Left colon (tissue), 2 donors: ENCODE measurements at regions of chr14 and their contacts with region 1.

Region 1: DNA sequence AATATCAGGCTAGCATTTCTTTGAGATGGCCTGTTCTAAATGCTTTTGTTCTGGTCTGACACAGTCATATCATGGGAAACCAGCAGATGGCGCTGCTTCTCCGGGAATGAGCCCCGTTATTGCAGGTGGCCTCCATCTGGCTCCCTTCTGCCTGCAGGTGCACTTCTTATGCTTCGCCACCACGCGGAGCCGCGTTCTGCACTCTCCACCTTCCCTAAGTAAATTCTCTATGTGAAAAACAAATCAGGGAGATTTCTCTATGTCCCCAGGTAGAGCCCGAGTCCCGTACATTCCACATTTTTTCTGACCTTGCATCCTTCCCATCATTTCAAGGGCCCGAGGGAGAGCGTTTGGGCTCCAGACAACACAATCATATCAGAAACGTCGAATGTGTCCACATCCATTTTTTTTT is 26.2 kb downstream of the GLRX5 start:
- DNase-seq: peak; percentile 80 to 93
- ATAC-seq: peak; percentile 99

Region 2: GRCh38 chr14:95774265-95775160 is 213.5 kb after region 1 on chr14:
- intact Hi-C with region 1: loop called in 1 of 2 experiments (anchors 5 kb)
- DNase-seq: peak in 1 of 2 donors; percentile 41
- ATAC-seq: peak; percentile 44

Region 3: DNA sequence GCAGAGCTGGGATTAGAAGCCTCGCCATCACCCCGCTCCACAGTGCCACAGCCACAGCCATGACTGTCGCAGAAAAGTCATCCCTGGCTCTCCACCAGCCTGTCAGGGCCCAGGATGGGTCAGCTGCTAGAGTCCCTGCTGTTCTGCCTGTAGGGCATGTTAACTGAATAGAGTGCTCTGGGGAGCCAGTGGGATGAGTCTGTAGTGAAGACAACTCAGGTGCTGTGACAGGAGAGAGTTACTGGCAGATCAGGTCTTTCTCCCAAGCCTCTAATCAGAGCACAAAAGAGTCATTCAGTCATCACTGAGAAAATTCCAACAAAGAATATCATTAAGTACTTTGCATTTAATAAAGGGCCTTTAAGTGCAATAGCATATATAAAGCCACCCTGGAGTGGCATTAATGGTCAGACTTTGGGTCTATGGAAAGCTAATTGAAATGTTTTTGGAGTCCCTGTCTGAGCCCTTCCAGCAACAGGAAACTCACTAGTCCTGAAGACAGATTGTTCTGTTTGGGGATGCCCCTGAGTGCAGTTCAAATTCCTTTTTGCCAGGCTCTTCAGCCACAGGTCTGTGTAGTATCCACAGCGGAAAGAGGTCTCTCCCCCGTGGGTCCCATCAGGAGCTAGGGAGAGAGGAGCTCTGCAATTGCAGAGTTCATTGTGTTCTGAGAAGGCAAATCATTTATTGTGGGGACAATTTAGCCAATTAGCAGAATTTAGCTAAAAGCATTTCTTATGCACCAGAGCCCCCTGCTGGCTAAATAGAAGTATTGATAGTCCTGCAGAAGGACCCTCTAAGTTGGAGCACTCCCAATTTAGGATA is 433.0 kb after region 1 on chr14:
- intact Hi-C with region 1: loop called in 1 of 2 experiments (anchors 5 kb)
- DNase-seq: no peak
- ATAC-seq: no peak

Region 4: DNA sequence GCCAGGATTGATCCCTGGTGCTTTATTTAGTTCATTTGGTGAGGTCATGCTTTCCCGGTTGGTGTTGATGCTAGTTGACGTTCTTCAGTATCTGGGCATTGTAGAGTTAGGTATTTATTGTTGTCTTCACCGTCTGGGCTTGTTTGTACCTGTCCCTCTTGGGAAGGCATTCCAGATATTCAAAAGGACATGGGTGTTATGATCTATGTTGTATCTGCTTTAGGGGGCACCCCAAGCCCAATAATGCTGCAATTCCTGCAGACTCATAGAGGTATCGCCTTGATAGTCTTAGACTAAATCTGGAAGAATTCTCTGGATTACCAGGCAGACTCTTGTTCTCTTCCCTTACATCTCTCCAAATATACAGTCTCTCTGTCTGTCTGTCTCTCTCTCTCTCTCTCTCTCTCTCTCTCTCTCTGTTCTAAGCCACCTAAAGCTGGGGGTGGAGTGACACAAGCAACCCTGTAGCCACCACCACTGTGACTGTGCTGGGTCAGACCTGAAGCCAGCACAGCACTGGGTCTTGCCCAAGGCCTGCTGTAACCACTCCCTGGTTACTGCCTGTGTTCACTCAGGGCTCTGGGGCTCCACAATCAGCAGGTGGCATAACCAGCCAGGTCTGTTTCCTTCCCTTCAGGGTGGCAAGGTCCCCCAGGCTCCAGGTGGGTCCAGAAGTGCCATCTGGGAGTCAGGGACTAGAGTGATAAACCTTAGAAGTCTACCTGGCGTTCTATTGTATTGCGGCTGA is 873.2 kb after region 1 on chr14:
- intact Hi-C with region 1: loop called in 1 of 2 experiments (anchors 10 kb)
- DNase-seq: no peak
- ATAC-seq: no peak